ENCODE measurements at regions of chr10 and their contacts with region 1.

Region 1: GRCh38 chr10:110893559-110894179 is 21.9 kb downstream of the PDCD4 start:
- DNase-seq: no peak
- ATAC-seq: peak; percentile 84
- H3K4me3 ChIP-seq: no peak overlapping the region
- H3K27ac ChIP-seq: no peak overlapping the region
- H3K4me1 ChIP-seq: no peaks in the 10 kb centered on the region
- H3K27me3 ChIP-seq: no peaks in the 10 kb centered on the region

Region 2: DNA sequence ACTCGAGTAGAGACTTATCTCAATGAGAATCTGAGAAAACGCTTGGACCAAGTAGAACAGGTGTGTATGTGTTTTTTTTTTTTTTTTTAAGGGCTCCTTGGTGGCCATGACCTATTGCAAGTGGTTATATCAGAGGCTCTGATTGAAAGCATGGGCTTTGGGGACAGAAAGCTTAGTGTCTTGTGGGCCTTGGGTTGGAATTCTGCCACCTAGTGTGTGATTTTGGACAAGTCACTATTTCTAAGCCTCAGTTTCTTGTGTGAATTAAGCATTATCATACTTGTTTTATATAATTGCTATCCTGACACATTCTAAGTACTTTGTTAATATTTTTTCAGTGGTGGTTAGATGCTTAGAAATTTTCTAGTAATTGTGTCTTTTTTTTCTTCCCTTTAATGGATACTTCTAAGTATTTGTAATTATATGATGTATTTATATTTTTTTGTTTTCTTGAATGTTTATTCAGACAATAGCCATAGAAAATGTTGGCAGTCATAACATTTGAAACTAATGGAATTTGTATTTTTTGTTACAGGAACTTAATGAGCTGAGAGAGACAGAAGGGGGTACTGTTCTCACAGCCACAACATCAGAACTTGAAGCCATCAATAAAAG is 293.1 kb before region 1 on chr10:
- intact Hi-C with region 1: loop called in 1 of 2 experiments (anchors 10 kb)
- DNase-seq: no peak
- ATAC-seq: no peak
- H3K4me3 ChIP-seq: no peak overlapping the region
- H3K27ac ChIP-seq: no peak overlapping the region
- H3K4me1 ChIP-seq: no peaks in the 10 kb centered on the region
- H3K27me3 ChIP-seq: no peaks in the 10 kb centered on the region

Region 3: GRCh38 chr10:110610308-110610774 is 283.3 kb before region 1 on chr10:
- intact Hi-C with region 1: loop called (anchors 10 kb)
- DNase-seq: no peak
- ATAC-seq: peak; percentile 67
- H3K4me3 ChIP-seq: no peak overlapping the region
- H3K27ac ChIP-seq: no peak overlapping the region
- H3K4me1 ChIP-seq: no peaks in the 10 kb centered on the region
- H3K27me3 ChIP-seq: no peaks in the 10 kb centered on the region

Region 4: GRCh38 chr10:110746254-110746826 is 147.3 kb before region 1 on chr10:
- intact Hi-C with region 1: loop called (anchors 5 kb)
- DNase-seq: no peak
- ATAC-seq: peak; percentile 87
- H3K4me3 ChIP-seq: no peak overlapping the region
- H3K27ac ChIP-seq: no peak overlapping the region
- H3K4me1 ChIP-seq: no peaks in the 10 kb centered on the region
- H3K27me3 ChIP-seq: no peaks in the 10 kb centered on the region

Region 5: GRCh38 chr10:110803830-110804338 is 89.8 kb before region 1 on chr10:
- intact Hi-C with region 1: loop called (anchors 2 to 5 kb)
- DNase-seq: peak in 1 of 2 donors; percentile 58
- ATAC-seq: peak; percentile 88
- H3K4me3 ChIP-seq: no peak overlapping the region
- H3K27ac ChIP-seq: peak overlapping the region in 1 of 2 donors; percentile 49
- H3K4me1 ChIP-seq: peaks cover 0 to 3% of the 10 kb centered on the region in 2 donors
- H3K27me3 ChIP-seq: no peaks in the 10 kb centered on the region